MCF 10A (cell line): ENCODE measurements at regions of chr4 and their contacts with region 1.

Region 1: GRCh38 chr4:102620697-102621497 is 119.7 kb downstream of the NFKB1 start:
- DNase-seq: peak; percentile 77
- H3K4me3 Mint-ChIP-seq: peak overlapping the region; percentile 44
- H3K27ac Mint-ChIP-seq: no peak overlapping the region
- H3K4me1 Mint-ChIP-seq: peaks cover 8% of the 10 kb centered on the region
- H3K27me3 Mint-ChIP-seq: no peaks in the 10 kb centered on the region
- CTCF ChIP-seq: peak; percentile 59

Region 2: DNA sequence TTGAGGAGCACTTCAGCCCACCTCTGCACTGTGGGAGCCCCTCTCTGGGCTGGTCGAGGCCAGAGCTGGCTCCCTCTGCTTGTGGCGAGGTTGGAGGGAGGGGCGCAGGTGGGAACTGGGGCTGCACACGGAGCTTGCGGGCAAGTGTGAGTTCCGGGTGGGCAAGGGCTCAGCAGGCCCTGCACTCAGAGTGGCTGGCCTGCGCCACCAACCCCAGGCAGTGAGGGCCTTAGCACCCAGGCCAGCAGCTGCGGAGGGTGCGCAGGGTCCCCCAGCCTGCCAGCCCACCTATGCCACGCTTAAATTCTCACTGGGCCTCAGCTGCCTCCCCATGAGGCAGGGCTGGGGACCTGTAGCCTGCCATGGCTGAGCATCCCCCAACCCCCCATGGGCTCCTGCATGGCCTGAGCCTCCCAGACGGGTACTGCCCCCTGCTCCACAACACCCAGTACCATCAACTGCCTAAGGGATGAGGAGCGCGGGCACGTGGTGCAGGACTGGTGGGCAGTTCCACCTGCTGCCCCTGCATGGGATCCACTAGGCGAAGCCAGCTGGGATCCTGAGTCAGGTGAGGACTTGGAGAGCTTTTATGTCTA is 386.6 kb before region 1 on chr4:
- CTCF ChIA-PET with region 1: no interaction called
- POLR2A ChIA-PET with region 1: no interaction called
- intact Hi-C with region 1: no loop called
- DNase-seq: no peak
- H3K4me3 Mint-ChIP-seq: no peak overlapping the region
- H3K27ac Mint-ChIP-seq: no peak overlapping the region
- H3K4me1 Mint-ChIP-seq: no peaks in the 10 kb centered on the region
- H3K27me3 Mint-ChIP-seq: no peaks in the 10 kb centered on the region
- CTCF ChIP-seq: no peak

Region 3: GRCh38 chr4:102344954-102345794 is 275.7 kb before region 1 on chr4 and contains the start of gene SLC39A8:
- CTCF ChIA-PET with region 1: no interaction called
- POLR2A ChIA-PET with region 1: no interaction called
- intact Hi-C with region 1: loop called (anchors 10 kb)
- DNase-seq: peak; percentile 89
- H3K4me3 Mint-ChIP-seq: peak within 1 kb of the TSS; percentile 76
- H3K27ac Mint-ChIP-seq: peak within 1 kb of the TSS; percentile 49
- H3K4me1 Mint-ChIP-seq: peaks cover 9% of the 10 kb centered on the region
- H3K27me3 Mint-ChIP-seq: no peaks in the 10 kb centered on the region
- CTCF ChIP-seq: peak; percentile 76
- total RNA-seq, gene SLC39A8: 35.1 and 43.3 TPM in 2 replicates

Region 4: DNA sequence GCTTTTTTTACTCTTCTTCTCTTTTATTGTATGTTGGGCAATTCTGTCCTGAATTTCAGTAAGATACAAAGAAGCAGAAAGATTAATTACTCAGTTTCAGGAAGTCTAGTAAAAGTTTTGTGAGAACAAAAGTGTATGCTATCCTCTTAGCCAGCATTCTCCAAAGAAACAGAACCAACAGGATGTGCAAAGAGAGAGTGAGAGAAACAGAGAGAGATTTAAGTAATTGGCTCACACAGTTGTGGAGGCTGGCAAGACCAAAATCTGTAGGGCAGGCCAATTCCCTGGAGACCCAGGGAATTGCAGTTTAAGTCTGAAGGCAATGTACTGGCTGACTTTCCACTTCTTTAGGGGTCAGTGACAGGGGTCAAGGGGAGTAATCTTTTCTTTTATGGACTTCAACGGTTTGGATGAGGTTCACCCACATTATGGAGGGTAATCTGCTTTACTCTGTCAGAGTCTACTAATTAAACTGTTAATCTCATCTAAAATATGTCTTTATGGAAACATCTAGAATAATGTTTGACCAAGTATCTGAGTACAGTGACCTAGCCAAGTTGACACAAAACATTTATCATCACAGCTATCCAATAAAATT is 216.4 kb before region 1 on chr4:
- CTCF ChIA-PET with region 1: no interaction called
- POLR2A ChIA-PET with region 1: no interaction called
- intact Hi-C with region 1: no loop called
- DNase-seq: no peak
- H3K4me3 Mint-ChIP-seq: no peak overlapping the region
- H3K27ac Mint-ChIP-seq: peak overlapping the region; percentile 41
- H3K4me1 Mint-ChIP-seq: peaks cover 7% of the 10 kb centered on the region
- H3K27me3 Mint-ChIP-seq: no peaks in the 10 kb centered on the region
- CTCF ChIP-seq: no peak

Region 5: DNA sequence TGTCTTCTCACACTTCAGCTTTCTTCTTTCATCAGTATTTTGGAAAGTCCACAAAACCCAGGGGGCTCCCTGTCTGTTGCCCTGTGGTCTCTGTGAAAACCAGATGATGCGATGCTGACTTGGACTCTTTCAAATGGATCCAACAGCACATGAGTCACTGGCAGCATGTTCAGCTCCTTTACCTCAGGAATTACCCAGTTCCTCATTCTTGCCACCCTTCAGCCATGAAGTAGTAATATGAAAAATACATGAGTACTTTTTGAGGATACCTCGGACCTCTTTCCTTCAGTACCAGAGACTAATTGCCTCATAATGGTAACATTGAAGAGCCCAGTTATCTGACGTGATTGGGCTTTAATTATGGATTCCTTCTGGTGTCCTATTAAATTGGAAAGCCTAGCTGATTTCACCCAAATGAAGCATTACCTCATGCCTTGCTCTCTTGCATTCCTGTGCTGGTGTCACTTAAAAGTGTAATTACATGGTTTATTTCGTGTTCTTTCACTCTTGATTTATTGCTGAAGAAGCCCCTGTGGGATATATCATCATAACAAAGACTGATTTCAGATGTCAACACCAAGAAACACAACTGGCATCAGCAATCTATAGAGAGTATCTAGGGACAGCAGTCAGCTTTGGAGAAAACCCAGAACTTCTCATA is 56.4 kb before region 1 on chr4:
- CTCF ChIA-PET with region 1: no interaction called
- POLR2A ChIA-PET with region 1: no interaction called
- intact Hi-C with region 1: no loop called
- DNase-seq: peak; percentile 24
- H3K4me3 Mint-ChIP-seq: no peak overlapping the region
- H3K27ac Mint-ChIP-seq: no peak overlapping the region
- H3K4me1 Mint-ChIP-seq: peaks cover 12% of the 10 kb centered on the region
- H3K27me3 Mint-ChIP-seq: no peaks in the 10 kb centered on the region
- CTCF ChIP-seq: no peak

Region 6: GRCh38 chr4:102586644-102587021 is 34.3 kb before region 1 on chr4:
- CTCF ChIA-PET with region 1: no interaction called
- POLR2A ChIA-PET with region 1: no interaction called
- intact Hi-C with region 1: no loop called
- DNase-seq: no peak
- H3K4me3 Mint-ChIP-seq: no peak overlapping the region
- H3K27ac Mint-ChIP-seq: no peak overlapping the region
- H3K4me1 Mint-ChIP-seq: peaks cover 7% of the 10 kb centered on the region
- H3K27me3 Mint-ChIP-seq: no peaks in the 10 kb centered on the region
- CTCF ChIP-seq: no peak

Region 7: DNA sequence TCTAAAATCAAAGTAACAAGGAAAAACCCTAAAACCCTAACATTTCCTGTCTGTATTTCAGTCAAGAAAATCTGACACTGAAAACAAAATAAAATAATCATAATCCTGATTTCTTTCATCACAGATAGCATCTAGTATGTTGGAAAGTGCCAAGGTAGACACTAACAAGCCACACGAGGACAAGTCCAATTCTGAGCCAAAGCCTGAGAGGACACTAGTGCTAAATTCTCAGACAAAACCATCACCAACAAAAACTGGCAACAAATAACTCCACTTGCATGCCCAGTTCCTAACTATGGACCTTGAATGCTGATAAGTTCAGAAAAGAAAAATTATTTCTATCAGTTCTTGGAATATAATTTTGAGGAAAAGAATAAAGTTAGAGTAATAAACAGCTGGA is 26.2 kb after region 1 on chr4:
- CTCF ChIA-PET with region 1: interaction called, 15 read pairs
- POLR2A ChIA-PET with region 1: no interaction called
- intact Hi-C with region 1: no loop called
- DNase-seq: no peak
- H3K4me3 Mint-ChIP-seq: no peak overlapping the region
- H3K27ac Mint-ChIP-seq: no peak overlapping the region
- H3K4me1 Mint-ChIP-seq: no peaks in the 10 kb centered on the region
- H3K27me3 Mint-ChIP-seq: no peaks in the 10 kb centered on the region
- CTCF ChIP-seq: no peak

Region 8: GRCh38 chr4:102789317-102789717 is 168.4 kb after region 1 on chr4:
- CTCF ChIA-PET with region 1: interaction called, 5 read pairs
- POLR2A ChIA-PET with region 1: interaction called, 7 read pairs
- intact Hi-C with region 1: loop called (anchors 5 kb)
- DNase-seq: peak; percentile 69
- H3K4me3 Mint-ChIP-seq: no peak overlapping the region
- H3K27ac Mint-ChIP-seq: peak overlapping the region; percentile 46
- H3K4me1 Mint-ChIP-seq: no peaks in the 10 kb centered on the region
- H3K27me3 Mint-ChIP-seq: no peaks in the 10 kb centered on the region
- CTCF ChIP-seq: no peak

Region 9: GRCh38 chr4:103002551-103002950 is 381.7 kb after region 1 on chr4:
- CTCF ChIA-PET with region 1: interaction called, 101 read pairs
- POLR2A ChIA-PET with region 1: interaction called, 9 read pairs
- intact Hi-C with region 1: no loop called
- DNase-seq: peak; percentile 18
- H3K4me3 Mint-ChIP-seq: no peak overlapping the region
- H3K27ac Mint-ChIP-seq: no peak overlapping the region
- H3K4me1 Mint-ChIP-seq: no peaks in the 10 kb centered on the region
- H3K27me3 Mint-ChIP-seq: peaks cover 24% of the 10 kb centered on the region
- CTCF ChIP-seq: no peak

Region 10: GRCh38 chr4:103099691-103100392 is 478.9 kb after region 1 on chr4 and contains the start of gene BDH2:
- CTCF ChIA-PET with region 1: interaction called, 27 read pairs
- POLR2A ChIA-PET with region 1: interaction called, 3 read pairs
- intact Hi-C with region 1: loop called (anchors 2 kb)
- DNase-seq: peak; percentile 96
- H3K4me3 Mint-ChIP-seq: peak within 1 kb of the TSS; percentile 88
- H3K27ac Mint-ChIP-seq: peak within 1 kb of the TSS; percentile 90
- H3K4me1 Mint-ChIP-seq: peaks cover 16% of the 10 kb centered on the region
- H3K27me3 Mint-ChIP-seq: no peaks in the 10 kb centered on the region
- CTCF ChIP-seq: peak; percentile 59
- total RNA-seq, gene BDH2: 14.3 and 17.6 TPM in 2 replicates